ENCODE measurements at regions of chr6 and their contacts with region 1.

Region 1: DNA sequence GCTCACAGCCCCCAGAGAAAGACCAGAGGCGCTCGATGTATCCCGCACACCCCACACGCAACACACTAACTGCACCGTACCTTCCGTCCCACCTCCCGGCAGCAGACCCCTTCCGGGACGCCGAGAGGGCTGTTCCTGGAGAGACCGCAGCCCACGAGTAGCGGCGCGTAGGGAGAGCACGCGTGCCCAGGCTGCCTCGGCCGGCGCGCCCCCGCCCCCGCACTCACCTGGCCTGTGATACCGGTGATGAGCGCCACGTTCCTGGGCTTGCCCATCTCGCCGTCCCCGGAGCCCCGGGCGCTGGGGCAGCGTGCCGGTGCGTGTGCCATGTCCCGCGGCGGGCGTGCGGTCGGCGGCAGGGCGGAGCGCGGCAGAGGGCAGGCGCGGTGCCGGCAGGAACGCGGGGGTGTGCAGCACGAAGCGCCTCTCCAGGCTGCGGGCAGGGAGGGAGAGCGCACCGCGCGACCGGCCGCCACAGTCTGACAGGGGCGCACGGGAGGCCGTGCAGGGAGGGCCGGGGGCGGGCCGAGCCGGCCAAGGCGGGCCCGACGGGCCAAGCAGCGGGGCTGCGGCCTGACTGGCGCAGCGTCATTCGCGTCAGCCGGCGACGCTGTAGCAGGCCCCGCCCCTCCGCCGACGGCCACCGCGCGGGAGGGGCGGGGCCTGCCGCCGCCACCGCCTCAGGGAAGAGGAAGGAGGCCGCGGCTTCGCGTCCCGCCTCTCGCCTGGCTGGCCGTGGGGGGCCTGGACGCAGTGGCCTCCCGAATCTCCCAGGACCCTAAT is at the start of gene GMDS:
- DNase-seq: peak; percentile 90
- H3K4me3 ChIP-seq: peak within 1 kb of the TSS; percentile 23 to 91 (median 70)
- H3K27ac ChIP-seq: peak within 1 kb of the TSS; percentile 67
- H3K4me1 ChIP-seq: peaks cover 10% of the 10 kb centered on the region
- H3K27me3 ChIP-seq: no peaks in the 10 kb centered on the region
- CTCF ChIP-seq: no peak
- POLR2A ChIP-seq: peak; percentile 87
- total RNA-seq, gene GMDS: 23.5 TPM in 2 replicates

Region 2: DNA sequence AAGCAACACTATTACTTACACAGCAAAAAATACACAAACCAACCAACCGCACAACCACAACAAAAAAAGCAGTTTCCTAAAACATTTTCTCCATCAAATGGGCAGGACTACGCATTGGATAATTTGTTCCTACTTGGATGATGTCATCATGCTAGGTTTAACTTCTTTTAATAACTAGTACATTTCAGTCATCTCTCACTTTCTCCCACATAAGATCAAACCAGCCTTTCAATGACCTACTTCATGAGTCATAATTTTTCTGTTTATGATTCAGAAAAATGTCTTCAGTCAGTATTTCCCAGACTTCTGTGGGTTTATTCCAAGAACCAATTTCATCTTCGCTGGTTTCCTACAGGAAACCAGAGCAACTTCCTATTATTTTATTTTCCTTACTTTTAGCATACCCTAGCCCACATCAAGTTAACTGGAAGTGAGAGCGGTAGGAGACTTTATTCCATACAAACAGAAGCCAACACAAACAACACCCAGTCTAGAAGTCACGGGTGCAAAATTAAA is 134.1 kb before region 1 on chr6:
- CTCF ChIA-PET with region 1: no interaction called
- POLR2A ChIA-PET with region 1: no interaction called
- dilution Hi-C with region 1: no loop called
- intact Hi-C with region 1: loop called (anchors 5 kb)
- DNase-seq: peak; percentile 97
- H3K4me3 ChIP-seq: peak overlapping the region in 1 of 3 experiments; percentile 51
- H3K27ac ChIP-seq: peak overlapping the region; percentile 76
- H3K4me1 ChIP-seq: peaks cover 40% of the 10 kb centered on the region
- H3K27me3 ChIP-seq: no peaks in the 10 kb centered on the region
- CTCF ChIP-seq: no peak
- POLR2A ChIP-seq: no peak

Region 3: DNA sequence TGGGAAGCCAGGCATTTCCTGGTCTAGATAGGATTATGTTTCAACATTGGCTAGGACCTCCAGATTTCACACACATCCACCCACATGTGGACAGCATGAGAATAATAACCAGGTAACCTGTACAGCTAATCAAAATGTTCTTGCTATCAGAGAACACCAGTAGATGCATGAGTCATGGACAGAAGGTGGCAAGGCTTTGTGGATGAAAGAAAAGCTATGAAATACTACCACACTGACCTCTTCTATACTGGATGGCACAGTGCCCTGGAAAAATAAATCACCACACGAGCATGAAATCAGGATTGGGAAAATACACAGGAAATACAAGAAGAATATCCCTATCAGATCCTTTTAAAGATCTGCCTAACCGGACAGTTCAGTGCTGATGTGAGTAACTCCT is 112.9 kb before region 1 on chr6:
- CTCF ChIA-PET with region 1: no interaction called
- POLR2A ChIA-PET with region 1: no interaction called
- dilution Hi-C with region 1: no loop called
- intact Hi-C with region 1: loop called (anchors 5 kb)
- DNase-seq: peak; percentile 88
- H3K4me3 ChIP-seq: no peak overlapping the region
- H3K27ac ChIP-seq: no peak overlapping the region
- H3K4me1 ChIP-seq: peaks cover 30% of the 10 kb centered on the region
- H3K27me3 ChIP-seq: no peaks in the 10 kb centered on the region
- CTCF ChIP-seq: no peak
- POLR2A ChIP-seq: no peak

Region 4: GRCh38 chr6:2203264-2203663 is 42.0 kb before region 1 on chr6:
- CTCF ChIA-PET with region 1: interaction called, 3 read pairs
- POLR2A ChIA-PET with region 1: no interaction called
- dilution Hi-C with region 1: no loop called
- intact Hi-C with region 1: loop called (anchors 2 kb)
- DNase-seq: peak; percentile 94
- H3K4me3 ChIP-seq: no peak overlapping the region
- H3K27ac ChIP-seq: peak overlapping the region; percentile 72
- H3K4me1 ChIP-seq: peaks cover 17% of the 10 kb centered on the region
- H3K27me3 ChIP-seq: no peaks in the 10 kb centered on the region
- CTCF ChIP-seq: no peak
- POLR2A ChIP-seq: no peak

Region 5: DNA sequence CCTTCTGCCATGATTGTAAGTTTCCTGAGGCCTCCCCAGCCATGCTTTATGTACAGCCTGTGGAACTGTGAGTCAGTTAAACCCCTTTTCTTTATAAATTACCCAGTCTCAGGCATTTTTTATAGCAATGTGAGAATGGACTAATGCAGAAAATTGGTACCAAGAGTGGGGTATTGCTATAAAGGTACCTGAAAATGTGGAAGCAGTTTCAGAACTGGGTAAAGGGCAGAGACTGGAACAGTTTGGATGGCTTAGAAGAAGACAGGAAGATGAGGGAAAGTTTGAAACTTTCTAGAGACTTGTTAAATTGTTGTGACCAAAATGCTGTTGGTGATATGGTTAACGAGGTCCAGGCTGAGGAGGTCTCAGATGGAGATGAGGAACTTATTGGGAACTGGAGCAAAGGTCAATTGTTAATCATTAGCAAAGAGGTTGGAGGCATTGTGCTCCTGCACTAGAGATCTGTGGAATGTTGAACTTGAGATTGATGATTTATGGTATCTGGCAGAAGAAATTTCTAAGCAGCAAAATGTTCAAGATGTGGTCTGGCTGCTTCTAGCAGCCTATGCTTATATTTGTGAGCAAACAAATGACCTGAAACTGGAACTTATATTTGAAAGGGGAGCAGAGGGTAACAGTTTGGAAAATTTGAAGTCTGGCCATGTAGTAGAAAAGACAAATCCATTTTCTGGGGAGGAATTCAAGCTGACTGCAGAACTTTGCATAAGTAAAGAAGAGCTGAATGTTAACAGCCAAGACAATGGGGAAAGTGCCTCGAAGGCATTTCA is 79.1 kb after region 1 on chr6:
- CTCF ChIA-PET with region 1: no interaction called
- POLR2A ChIA-PET with region 1: no interaction called
- dilution Hi-C with region 1: no loop called
- intact Hi-C with region 1: no loop called
- DNase-seq: no peak
- H3K4me3 ChIP-seq: no peak overlapping the region
- H3K27ac ChIP-seq: no peak overlapping the region
- H3K4me1 ChIP-seq: no peaks in the 10 kb centered on the region
- H3K27me3 ChIP-seq: no peaks in the 10 kb centered on the region
- CTCF ChIP-seq: no peak
- POLR2A ChIP-seq: no peak